ENCODE measurements at regions of chr1 and their contacts with region 1.

Region 1: DNA sequence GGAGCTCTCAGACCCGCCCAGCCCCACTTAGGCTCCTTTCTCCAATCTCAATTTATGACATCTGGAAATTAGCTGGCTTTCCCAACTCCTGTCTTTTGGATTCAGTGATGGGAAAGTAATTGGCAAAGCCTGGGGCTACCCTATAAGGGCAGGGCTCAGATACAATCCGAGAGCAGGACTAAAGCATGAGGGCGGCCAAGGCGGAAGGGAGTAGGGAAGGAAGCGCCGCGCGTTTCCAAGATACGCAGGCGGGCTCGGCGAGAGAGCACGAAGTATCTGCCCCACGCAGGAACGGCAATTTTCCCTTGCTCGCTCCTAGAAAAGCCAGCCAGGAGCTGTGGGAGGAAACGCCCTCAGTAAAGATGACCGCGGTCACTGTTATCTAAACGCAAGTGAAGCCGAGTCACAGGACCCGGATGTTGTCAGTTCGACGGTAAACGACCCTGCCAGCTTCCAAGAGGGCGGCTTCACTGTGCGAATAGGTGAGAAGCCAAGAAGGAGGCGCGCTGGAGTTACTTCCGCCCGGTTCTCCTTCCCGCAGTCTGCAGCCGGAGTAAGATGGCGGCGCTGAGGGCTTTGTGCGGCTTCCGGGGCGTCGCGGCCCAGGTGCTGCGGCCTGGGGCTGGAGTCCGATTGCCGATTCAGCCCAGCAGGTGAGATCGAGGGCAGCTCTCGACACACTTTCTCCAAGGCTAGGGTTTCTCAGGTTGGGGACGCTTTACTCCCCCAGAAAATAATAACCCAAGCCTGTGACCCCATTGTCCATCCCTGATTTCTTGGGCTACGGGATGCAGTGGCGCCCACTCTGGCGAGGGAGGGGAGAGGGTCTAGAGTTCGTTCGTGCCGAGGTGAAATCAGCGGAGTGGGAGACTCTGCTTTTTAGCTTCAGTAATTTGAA is at the start of gene NDUFS2:
- DNase-seq: peak; percentile 97
- ATAC-seq: peak; percentile 98
- H3K4me3 ChIP-seq: peak within 1 kb of the TSS; percentile 77 to 99 (median 88)
- H3K4me3 Mint-ChIP-seq: peak within 1 kb of the TSS; percentile 96
- H3K27ac ChIP-seq: peak within 1 kb of the TSS; percentile 81 to 88
- H3K27ac Mint-ChIP-seq: peak within 1 kb of the TSS; percentile 97
- H3K4me1 ChIP-seq: peaks cover 16 to 26% of the 10 kb centered on the region in 2 donors
- H3K4me1 Mint-ChIP-seq: peaks cover 36% of the 10 kb centered on the region
- H3K27me3 ChIP-seq: no peaks in the 10 kb centered on the region
- H3K27me3 Mint-ChIP-seq: no peaks in the 10 kb centered on the region
- CTCF ChIP-seq: no peak
- total RNA-seq, gene NDUFS2: 80.2 and 82.3 TPM in 2 replicates

Region 2: GRCh38 chr1:160911441-160911840 is 290.6 kb before region 1 on chr1:
- CTCF ChIA-PET with region 1: no interaction called
- POLR2A ChIA-PET with region 1: no interaction called
- intact Hi-C with region 1: no loop called
- DNase-seq: no peak
- ATAC-seq: no peak
- H3K4me3 ChIP-seq: no peak overlapping the region
- H3K4me3 Mint-ChIP-seq: no peak overlapping the region
- H3K27ac ChIP-seq: no peak overlapping the region
- H3K27ac Mint-ChIP-seq: no peak overlapping the region
- H3K4me1 ChIP-seq: no peaks in the 10 kb centered on the region
- H3K4me1 Mint-ChIP-seq: no peaks in the 10 kb centered on the region
- H3K27me3 ChIP-seq: no peaks in the 10 kb centered on the region
- H3K27me3 Mint-ChIP-seq: no peaks in the 10 kb centered on the region
- CTCF ChIP-seq: no peak

Region 3: DNA sequence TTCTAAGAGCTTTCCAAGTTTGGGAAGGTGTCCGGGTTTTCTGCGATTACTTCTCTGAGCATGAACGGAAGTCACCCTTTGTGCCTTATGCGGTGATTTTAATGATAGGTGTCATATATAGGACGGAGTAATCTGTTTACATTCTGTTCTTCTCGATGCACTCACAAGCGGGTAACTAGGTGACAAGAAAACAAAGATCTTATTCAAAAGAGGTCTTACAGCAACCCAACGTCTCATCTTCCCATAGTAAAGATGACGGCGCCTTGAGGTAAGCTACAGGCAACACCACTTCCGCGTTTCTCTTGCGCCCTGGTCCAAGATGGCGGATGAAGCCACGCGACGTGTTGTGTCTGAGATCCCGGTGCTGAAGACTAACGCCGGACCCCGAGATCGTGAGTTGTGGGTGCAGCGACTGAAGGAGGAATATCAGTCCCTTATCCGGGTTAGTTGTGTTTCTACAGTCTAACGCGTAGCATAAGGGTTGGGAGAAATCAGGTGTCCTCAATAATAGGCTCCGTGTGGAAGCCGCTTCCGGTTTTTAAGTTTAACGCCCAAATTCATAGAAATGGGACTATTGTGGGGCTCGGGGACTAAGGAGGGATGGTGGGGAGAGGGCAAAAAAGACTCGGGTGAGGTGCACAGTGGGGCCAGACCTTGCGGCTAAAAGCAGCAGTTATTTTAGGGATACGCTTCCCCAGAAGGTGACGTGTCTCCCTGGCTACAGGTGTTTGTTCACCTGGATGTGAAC is 48.2 kb before region 1 on chr1 and contains the start of gene UFC1:
- CTCF ChIA-PET with region 1: interaction called, 4 read pairs
- POLR2A ChIA-PET with region 1: interaction called, 5 read pairs
- intact Hi-C with region 1: loop called (anchors 1 kb)
- DNase-seq: peak; percentile 94
- ATAC-seq: peak; percentile 97
- H3K4me3 ChIP-seq: peak within 1 kb of the TSS; percentile 88 to 100 (median 90)
- H3K4me3 Mint-ChIP-seq: peak within 1 kb of the TSS; percentile 97
- H3K27ac ChIP-seq: peak within 1 kb of the TSS; percentile 95 to 98
- H3K27ac Mint-ChIP-seq: peak within 1 kb of the TSS; percentile 99
- H3K4me1 ChIP-seq: peaks cover 15 to 17% of the 10 kb centered on the region in 2 donors
- H3K4me1 Mint-ChIP-seq: peaks cover 26% of the 10 kb centered on the region
- H3K27me3 ChIP-seq: no peaks in the 10 kb centered on the region
- H3K27me3 Mint-ChIP-seq: no peaks in the 10 kb centered on the region
- CTCF ChIP-seq: no peak
- total RNA-seq, gene UFC1: 78.1 and 91.0 TPM in 2 replicates

Region 4: DNA sequence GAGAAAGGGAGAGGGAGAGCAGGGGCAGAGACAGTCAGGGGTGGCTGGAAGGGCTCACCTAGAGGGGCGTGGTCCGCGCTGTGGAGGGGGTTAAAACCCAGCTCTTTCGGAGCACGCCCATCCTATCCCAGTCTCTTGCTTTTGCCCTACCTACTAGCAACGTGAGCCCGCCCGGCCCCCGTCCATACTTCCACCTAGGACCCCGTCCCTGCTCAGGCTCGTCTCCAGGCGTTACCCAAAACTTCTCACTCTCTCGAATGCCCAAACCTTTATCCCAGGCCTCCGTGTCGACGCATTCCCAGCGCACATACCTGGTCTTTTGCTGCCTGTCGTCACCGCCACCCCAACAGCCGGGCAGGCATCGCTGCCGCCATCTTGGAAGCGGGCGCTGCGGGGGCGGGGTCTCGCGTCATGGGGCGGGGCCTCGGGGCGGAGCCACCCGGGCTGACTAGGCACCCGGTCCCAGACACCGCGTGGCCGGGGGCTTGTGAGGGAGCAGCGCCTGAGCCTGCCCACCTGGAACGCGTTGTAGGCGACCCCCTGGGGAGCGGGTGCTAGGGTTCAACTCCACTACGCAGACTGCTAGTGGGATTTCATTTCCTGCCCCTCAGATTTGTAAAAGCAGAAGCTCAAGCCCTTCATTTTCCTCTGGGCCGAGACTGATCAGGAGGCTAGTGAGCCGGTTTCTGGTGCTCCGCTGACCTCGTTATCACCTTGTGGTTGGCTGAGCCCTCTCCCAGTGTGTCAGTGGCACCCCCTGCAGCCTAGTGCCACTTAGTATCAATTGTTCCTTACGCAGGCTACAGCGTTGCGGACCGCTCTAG is 24.8 kb before region 1 on chr1 and contains the start of gene B4GALT3:
- CTCF ChIA-PET with region 1: interaction called, 18 read pairs
- POLR2A ChIA-PET with region 1: interaction called, 5 read pairs
- intact Hi-C with region 1: loop called (anchors 1 kb)
- DNase-seq: peak; percentile 92
- ATAC-seq: peak; percentile 92
- H3K4me3 ChIP-seq: peak within 1 kb of the TSS; percentile 75 to 95 (median 90)
- H3K4me3 Mint-ChIP-seq: peak within 1 kb of the TSS; percentile 99
- H3K27ac ChIP-seq: peak within 1 kb of the TSS; percentile 76 to 81
- H3K27ac Mint-ChIP-seq: peak within 1 kb of the TSS; percentile 100
- H3K4me1 ChIP-seq: peaks cover 36 to 52% of the 10 kb centered on the region in 2 donors
- H3K4me1 Mint-ChIP-seq: peaks cover 64% of the 10 kb centered on the region
- H3K27me3 ChIP-seq: no peaks in the 10 kb centered on the region
- H3K27me3 Mint-ChIP-seq: no peaks in the 10 kb centered on the region
- CTCF ChIP-seq: no peak
- total RNA-seq, gene B4GALT3: 37.6 and 42.9 TPM in 2 replicates

Region 5: DNA sequence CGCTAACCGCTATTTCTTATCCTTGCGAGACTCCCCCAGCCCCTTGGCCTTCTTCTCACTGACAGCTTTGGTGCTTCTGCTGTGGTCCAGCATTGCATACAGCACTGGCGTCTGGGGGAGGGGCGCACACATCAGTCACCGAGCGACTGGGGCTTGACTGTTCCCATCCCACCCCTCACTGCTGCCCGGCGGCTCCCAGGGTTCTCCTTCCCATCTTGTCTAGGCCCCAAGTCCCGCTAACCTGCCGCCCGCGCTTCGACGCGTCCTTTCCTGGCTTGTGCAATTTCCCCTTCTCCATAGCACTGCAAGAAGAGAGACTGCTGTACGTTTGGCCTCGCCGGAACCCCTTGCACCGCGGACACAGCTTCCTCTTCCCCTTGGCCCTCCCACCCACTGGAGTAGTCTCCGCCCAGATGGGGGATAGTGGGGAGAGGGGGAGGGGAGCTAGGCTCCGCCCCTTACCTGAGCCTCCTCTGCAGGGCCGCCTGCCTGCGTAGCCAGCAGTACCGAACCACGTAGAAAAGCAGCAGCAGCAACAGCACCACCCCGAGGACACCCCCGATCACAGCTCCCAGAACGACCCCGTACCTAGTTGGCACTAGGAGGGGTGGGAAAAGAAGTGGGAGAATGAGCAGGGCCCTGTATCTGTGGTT is 103.9 kb after region 1 on chr1:
- CTCF ChIA-PET with region 1: no interaction called
- POLR2A ChIA-PET with region 1: interaction called, 3 read pairs
- intact Hi-C with region 1: loop called (anchors 5 kb)
- DNase-seq: peak; percentile 93
- ATAC-seq: peak; percentile 89
- H3K4me3 ChIP-seq: peak overlapping the region; percentile 66 to 91 (median 80)
- H3K4me3 Mint-ChIP-seq: peak overlapping the region; percentile 97
- H3K27ac ChIP-seq: peak overlapping the region; percentile 59 to 72
- H3K27ac Mint-ChIP-seq: peak overlapping the region; percentile 93
- H3K4me1 ChIP-seq: peaks cover 26% of the 10 kb centered on the region in 2 donors
- H3K4me1 Mint-ChIP-seq: peaks cover 42% of the 10 kb centered on the region
- H3K27me3 ChIP-seq: no peaks in the 10 kb centered on the region
- H3K27me3 Mint-ChIP-seq: no peaks in the 10 kb centered on the region
- CTCF ChIP-seq: peak; percentile 49

Region 6: DNA sequence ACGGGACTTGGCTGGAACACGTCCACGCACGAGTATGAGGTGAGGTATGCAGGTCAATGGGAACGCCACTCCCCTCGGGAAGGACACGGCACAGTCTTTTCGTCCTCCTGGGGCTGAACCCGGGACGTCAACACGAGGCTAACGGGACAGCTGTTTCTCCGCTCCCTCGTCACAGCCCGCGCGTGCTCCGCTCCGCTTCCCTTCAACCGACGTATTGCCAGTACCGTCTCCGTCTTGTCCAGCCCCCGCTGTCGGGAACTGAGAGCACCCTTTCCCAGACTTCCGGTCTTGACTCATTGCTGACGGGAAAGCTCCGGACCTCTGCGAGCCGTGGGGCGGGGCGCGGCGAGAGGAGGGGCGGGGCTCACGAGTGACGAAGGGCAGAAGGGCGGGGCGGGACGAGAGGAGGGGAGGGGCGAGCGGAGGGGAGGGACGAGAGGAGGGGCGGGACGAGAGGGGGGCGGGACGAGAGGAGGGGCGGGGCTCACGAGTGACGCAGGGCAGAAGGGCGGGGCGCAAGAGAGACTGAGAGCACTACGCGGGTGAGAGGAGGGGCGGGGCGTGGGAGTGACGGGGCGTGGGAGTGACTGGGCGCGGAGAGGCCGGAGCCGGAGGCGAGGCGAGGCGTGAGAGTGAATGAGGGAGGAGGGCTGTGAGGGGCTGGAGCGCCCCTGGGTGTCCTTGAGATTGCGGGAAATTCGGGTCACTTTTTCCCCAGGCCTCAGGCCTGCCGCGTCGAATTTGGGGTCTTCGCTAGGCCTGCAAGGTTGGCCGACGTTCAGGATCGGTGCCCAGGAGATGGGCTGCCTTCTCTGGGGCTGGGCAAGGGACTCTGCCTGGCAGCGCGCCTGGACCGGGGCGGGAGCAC is 187.8 kb after region 1 on chr1:
- CTCF ChIA-PET with region 1: interaction called, 4 read pairs
- POLR2A ChIA-PET with region 1: interaction called, 3 read pairs
- intact Hi-C with region 1: loop called (anchors 2 kb)
- DNase-seq: peak; percentile 93
- ATAC-seq: peak; percentile 92
- H3K4me3 ChIP-seq: peak overlapping the region; percentile 65 to 89 (median 80)
- H3K4me3 Mint-ChIP-seq: peak overlapping the region; percentile 95
- H3K27ac ChIP-seq: peak overlapping the region; percentile 83
- H3K27ac Mint-ChIP-seq: peak overlapping the region; percentile 94
- H3K4me1 ChIP-seq: peaks cover 9 to 14% of the 10 kb centered on the region in 2 donors
- H3K4me1 Mint-ChIP-seq: peaks cover 18% of the 10 kb centered on the region
- H3K27me3 ChIP-seq: no peaks in the 10 kb centered on the region
- H3K27me3 Mint-ChIP-seq: no peaks in the 10 kb centered on the region
- CTCF ChIP-seq: no peak

Region 7: GRCh38 chr1:161631076-161631475 is 429.0 kb after region 1 on chr1 and contains the start of gene FCGR3B:
- CTCF ChIA-PET with region 1: no interaction called
- POLR2A ChIA-PET with region 1: no interaction called
- intact Hi-C with region 1: no loop called
- DNase-seq: no peak
- ATAC-seq: no peak
- H3K4me3 ChIP-seq: peak within 1 kb of the TSS in 1 of 5 experiments; percentile 25
- H3K4me3 Mint-ChIP-seq: no peak within 1 kb of the TSS
- H3K27ac ChIP-seq: no peak within 1 kb of the TSS
- H3K27ac Mint-ChIP-seq: no peak within 1 kb of the TSS
- H3K4me1 ChIP-seq: peaks cover 4 to 6% of the 10 kb centered on the region in 2 donors
- H3K4me1 Mint-ChIP-seq: peaks cover 8% of the 10 kb centered on the region
- H3K27me3 ChIP-seq: peaks cover 0 to 5% (median 0%) of the 10 kb centered on the region in 4 experiments
- H3K27me3 Mint-ChIP-seq: no peaks in the 10 kb centered on the region
- CTCF ChIP-seq: no peak
- total RNA-seq, gene FCGR3B: not detected in 2 replicates

Region 8: GRCh38 chr1:161956097-161956496 is 754.0 kb after region 1 on chr1:
- CTCF ChIA-PET with region 1: no interaction called
- POLR2A ChIA-PET with region 1: no interaction called
- intact Hi-C with region 1: no loop called
- DNase-seq: no peak
- ATAC-seq: no peak
- H3K4me3 ChIP-seq: no peak overlapping the region
- H3K4me3 Mint-ChIP-seq: no peak overlapping the region
- H3K27ac ChIP-seq: no peak overlapping the region
- H3K27ac Mint-ChIP-seq: no peak overlapping the region
- H3K4me1 ChIP-seq: no peaks in the 10 kb centered on the region
- H3K4me1 Mint-ChIP-seq: peaks cover 11% of the 10 kb centered on the region
- H3K27me3 ChIP-seq: no peaks in the 10 kb centered on the region
- H3K27me3 Mint-ChIP-seq: no peaks in the 10 kb centered on the region
- CTCF ChIP-seq: no peak

Measured in B cell (primary cell).